Ovary (tissue), 10 donors: ENCODE measurements at regions of chr4 and their contacts with region 1.

Region 1: DNA sequence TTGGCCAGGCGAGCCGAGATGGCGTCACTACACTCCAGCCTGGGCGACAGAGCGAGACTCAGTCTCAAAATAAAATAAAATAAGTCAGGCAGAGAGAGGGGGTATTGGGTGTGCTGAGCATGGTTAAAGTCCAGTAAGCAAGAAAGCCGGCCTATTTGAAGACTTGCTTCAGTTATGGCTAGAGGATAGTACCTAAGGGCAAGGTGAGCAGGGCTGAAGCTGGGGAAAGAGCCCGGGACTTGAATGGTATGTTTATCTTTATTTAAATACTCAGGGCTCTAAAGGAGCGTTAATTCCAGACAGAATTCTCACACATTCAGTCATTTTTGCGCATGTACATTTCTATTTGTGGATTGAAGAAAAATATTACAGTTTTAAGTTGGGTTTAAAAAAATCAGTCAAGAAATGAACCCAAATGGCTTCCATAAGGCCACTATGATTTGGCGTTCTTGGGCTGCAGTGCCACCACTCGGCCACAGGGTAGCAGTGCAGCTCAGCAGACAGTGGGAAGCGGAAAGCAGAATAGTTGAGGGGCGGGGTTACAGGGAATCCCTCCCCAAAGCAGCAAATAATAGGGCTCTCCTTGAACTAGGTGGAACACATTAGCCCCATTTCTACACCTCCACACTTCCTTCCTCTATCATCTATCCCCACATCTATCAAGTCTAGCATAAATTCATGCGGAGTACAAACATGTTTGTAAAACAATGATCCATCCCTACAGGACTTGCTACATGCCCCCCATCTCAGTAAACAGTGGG is 37.2 kb upstream of the SH3D19 start:
- DNase-seq: peak; percentile 71 to 88 (median 85)
- H3K4me3 ChIP-seq: no peak overlapping the region
- H3K27ac ChIP-seq: no peak overlapping the region
- H3K4me1 ChIP-seq: no peaks in the 10 kb centered on the region
- H3K27me3 ChIP-seq: no peaks in the 10 kb centered on the region
- CTCF ChIP-seq: peak; percentile 72 to 94 (median 90)
- EP300 ChIP-seq: no peak
- POLR2A ChIP-seq: no peak

Region 2: GRCh38 chr4:151117371-151117962 is 245.1 kb before region 1 on chr4:
- intact Hi-C with region 1: loop called (anchors 2 to 10 kb)
- DNase-seq: peak; percentile 49 to 76 (median 63)
- H3K4me3 ChIP-seq: no peak overlapping the region
- H3K27ac ChIP-seq: no peak overlapping the region
- H3K4me1 ChIP-seq: no peaks in the 10 kb centered on the region
- H3K27me3 ChIP-seq: no peaks in the 10 kb centered on the region
- CTCF ChIP-seq: peak; percentile 62 to 71 (median 64)
- EP300 ChIP-seq: no peak
- POLR2A ChIP-seq: no peak